A673 (cell line): ENCODE measurements at regions of chr9 and their contacts with region 1.

Region 1: GRCh38 chr9:88197781-88198340 is 59.6 kb upstream of the SPATA31C2 start:
- DNase-seq: peak; percentile 90
- H3K4me3 ChIP-seq: peak overlapping the region; percentile 15
- H3K27ac ChIP-seq: peak overlapping the region; percentile 97
- H3K4me1 ChIP-seq: peaks cover 53% of the 10 kb centered on the region
- H3K27me3 ChIP-seq: no peaks in the 10 kb centered on the region
- CTCF ChIP-seq: no peak

Region 2: DNA sequence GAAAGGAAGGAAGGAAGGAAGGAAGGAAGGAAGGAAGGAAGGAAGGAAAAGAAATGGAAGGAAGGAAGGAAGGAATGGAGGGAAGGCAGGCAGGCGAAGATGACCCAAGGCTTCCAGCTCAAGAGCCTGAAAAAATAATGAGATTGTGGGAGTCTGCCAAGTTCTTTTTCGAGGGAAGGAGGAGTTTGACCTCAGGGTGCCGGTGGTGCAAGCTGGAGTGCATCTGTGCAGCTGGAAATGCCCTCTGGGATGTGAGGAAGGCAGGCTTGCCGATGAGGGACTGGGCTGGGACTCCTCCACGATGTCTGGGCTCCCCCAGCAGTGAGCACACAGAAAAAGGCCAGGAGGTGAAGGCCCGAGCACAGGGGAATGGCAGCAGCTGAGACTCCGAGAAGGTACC is 855.1 kb before region 1 on chr9:
- CTCF ChIA-PET with region 1: no interaction called
- POLR2A ChIA-PET with region 1: no interaction called
- intact Hi-C with region 1: loop called (anchors 10 kb)
- DNase-seq: peak; percentile 88
- H3K4me3 ChIP-seq: no peak overlapping the region
- H3K27ac ChIP-seq: peak overlapping the region; percentile 76
- H3K4me1 ChIP-seq: peaks cover 60% of the 10 kb centered on the region
- H3K27me3 ChIP-seq: no peaks in the 10 kb centered on the region
- CTCF ChIP-seq: no peak

Region 3: DNA sequence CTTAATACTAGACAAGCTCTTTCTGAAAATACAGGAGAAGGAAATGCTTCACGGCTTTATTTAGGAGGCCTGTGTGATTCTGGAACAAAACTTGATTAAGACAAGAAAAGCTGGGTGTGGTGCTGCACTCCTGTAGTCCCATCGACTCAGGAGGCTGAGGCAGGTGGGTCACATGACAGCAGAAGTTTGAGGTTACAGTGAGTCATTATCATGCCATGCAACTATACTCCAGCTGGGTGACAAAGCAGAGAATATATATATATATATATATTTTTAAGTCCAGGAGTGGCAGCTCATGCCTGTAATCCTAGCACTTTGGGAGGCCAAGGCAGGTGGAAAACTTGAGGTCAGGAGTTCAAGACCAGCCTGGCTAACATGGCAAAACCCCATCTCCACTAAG is 157.3 kb after region 1 on chr9:
- CTCF ChIA-PET with region 1: no interaction called
- POLR2A ChIA-PET with region 1: no interaction called
- intact Hi-C with region 1: no loop called
- DNase-seq: no peak
- H3K4me3 ChIP-seq: no peak overlapping the region
- H3K27ac ChIP-seq: no peak overlapping the region
- H3K4me1 ChIP-seq: no peaks in the 10 kb centered on the region
- H3K27me3 ChIP-seq: no peaks in the 10 kb centered on the region
- CTCF ChIP-seq: no peak

Region 4: DNA sequence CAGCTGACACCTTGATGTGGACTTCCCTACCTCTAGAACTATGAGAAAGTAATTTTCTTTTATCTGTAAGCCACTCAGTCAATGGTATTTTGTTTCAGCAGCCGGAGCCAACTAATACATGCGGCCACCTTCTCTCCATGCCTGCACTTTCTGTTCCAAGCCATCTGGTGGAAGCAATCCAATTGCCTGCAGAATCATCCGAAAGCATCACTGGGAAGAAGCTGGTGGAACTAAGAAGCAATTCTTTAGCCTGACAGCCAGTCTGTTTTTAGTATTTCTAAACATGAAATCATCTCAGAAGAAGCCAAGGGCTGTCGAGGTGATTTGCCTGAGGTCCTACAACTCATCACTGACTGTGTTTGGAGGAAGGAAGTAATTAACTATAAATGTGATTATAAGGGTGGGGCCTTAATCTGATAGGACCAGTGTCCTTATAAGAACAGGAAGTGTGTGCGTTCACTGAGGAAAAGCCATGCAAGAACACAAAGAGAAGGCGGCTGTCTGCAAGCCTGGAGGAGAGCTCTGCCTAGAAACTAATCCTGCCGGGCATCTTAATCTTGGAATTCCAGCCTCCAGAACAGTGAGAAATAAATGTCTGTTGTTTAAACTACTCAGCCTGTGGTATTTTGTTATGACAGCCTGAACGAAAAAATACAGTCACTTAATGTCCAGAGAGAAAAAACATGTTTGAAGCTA is 386.2 kb after region 1 on chr9:
- CTCF ChIA-PET with region 1: interaction called, 4 read pairs
- POLR2A ChIA-PET with region 1: no interaction called
- intact Hi-C with region 1: loop called (anchors 5 kb)
- DNase-seq: peak; percentile 98
- H3K4me3 ChIP-seq: no peak overlapping the region
- H3K27ac ChIP-seq: peak overlapping the region; percentile 91
- H3K4me1 ChIP-seq: peaks cover 15% of the 10 kb centered on the region
- H3K27me3 ChIP-seq: no peaks in the 10 kb centered on the region
- CTCF ChIP-seq: peak; percentile 32; the same call in 1 of the 2 replicates